Posterior cingulate gyrus (tissue), 11 donors: ENCODE measurements at regions of chr18 and their contacts with region 1.

Region 1: GRCh38 chr18:55351980-55352714 is 235.8 kb downstream of the TCF4 start:
- DNase-seq: no peak

Region 2: GRCh38 chr18:55384551-55385275 is 32.6 kb after region 1 on chr18:
- intact Hi-C with region 1: loop called (anchors 5 kb)
- DNase-seq: peak in 3 of 10 donors; percentile 44 to 88 (median 58)

Region 3: DNA sequence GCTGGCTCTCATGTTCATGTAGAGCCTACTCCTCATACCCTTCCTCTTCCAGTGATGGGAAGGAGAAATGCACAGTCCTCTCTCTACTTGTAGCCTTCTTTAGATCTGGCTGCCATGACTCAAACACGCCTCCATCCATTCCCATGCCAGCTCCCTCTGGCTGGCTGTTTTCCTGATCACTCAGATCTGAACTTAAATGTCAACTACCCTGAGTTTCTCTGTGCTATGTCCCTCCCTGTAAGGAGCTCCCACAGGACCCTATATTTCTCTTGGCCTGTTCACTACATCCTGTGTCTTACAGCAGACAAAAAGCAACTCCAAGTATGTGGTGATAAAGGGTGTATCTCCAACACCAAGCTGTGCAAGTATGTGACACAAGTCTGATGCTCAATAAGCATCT is 83.4 kb after region 1 on chr18:
- intact Hi-C with region 1: no loop called
- DNase-seq: peak in 1 of 10 donors; percentile 82